H1 (cell line): ENCODE measurements at regions of chr1 and their contacts with region 1.

Region 1: DNA sequence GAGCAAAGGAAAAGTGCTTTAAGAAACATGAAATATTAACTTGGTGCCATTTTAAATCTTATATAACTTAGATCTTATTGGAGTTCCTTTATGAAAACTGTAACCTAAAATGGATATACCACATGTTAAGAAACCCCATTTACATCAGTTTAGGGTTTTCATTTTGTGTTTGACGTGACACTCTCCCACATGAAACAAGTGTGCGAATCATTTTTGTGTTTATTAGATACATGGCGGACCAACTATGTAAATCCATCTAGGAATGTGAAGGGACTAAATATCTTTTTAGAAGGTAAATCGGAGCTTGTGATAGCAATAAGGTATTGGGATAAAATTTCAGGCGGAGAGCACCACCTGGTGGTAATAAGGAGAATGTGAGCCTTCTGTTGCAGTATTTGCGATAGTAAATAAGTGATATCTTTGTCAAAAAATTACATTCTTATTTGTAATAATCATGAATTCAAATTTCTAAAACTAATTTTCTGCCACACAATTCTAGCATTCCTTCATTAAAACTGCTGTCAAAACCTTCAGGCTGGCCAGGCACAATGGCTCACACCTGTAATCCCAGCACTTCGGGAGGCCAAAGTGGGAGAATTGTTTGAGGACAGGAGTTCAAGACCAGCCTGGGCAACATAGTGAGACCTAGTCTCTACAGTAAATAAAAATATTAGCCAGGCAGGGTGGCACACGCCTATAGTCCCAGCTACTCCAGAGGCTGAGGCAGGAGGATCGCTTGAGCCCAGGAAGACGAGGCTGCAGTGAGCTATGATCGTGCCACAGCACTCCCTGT is 31.3 kb downstream of the SMAP2 start:
- DNase-seq: no peak
- H3K4me3 ChIP-seq: no peak overlapping the region
- H3K27ac ChIP-seq: no peak overlapping the region
- H3K4me1 ChIP-seq: peaks cover 0 to 6% (median 1%) of the 10 kb centered on the region in 4 experiments; a peak in 2 of 7 replicates
- H3K27me3 ChIP-seq: no peaks in the 10 kb centered on the region
- CTCF ChIP-seq: peak in 2 of 3 experiments; percentile 48 to 72; a peak in 2 of 4 replicates
- EP300 ChIP-seq: no peak
- POLR2A ChIP-seq: no peak
- RAD21 ChIP-seq: peak; percentile 82 to 83

Region 2: DNA sequence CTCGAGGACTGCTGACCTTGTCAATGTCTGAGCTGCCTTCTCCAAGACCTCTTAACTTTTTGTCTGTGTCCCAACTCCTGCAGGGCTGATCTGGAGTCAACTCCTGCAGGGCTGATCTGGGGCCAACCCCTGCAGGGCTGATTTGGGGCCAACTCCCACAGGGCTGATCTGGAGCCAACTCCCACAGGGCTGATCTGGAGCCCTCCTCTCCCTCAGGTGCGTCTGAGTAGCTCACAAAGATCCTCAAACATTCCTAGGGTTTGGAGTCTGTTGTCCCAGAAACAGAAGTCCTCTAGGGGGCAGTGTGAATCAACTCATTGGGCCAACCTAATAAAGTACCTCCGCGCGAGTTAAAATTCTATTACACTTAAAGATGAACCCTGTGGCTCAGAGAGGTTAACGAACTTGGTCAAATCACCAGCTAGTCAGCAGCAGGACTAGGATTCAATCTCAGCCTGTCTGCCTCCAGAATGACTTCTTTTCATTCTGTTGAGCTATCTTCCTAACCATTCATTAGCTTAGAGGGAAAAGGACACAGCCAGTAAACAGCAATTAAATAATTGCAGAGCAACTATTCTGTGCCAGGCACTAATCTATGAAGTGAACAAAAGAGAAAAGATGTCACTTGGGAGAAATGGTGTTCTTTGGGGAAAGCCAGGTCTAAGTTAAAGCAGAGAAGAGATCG is 260.8 kb before region 1 on chr1:
- CTCF ChIA-PET with region 1: interaction called, 11 read pairs
- POLR2A ChIA-PET with region 1: no interaction called
- DNase-seq: peak; percentile 43 to 75
- H3K4me3 ChIP-seq: no peak overlapping the region
- H3K27ac ChIP-seq: no peak overlapping the region
- H3K4me1 ChIP-seq: peaks cover 0 to 2% (median 0%) of the 10 kb centered on the region in 4 experiments; a peak in 1 of 7 replicates
- H3K27me3 ChIP-seq: peaks cover 0 to 2% (median under 1%) of the 10 kb centered on the region in 4 experiments; a peak in 3 of 7 replicates
- CTCF ChIP-seq: peak in 2 of 3 experiments; percentile 80 to 88; a peak in 3 of 4 replicates
- EP300 ChIP-seq: no peak
- POLR2A ChIP-seq: peak in 1 of 2 experiments; percentile 41; a peak in 1 of 3 replicates
- RAD21 ChIP-seq: peak; percentile 88 to 89

Region 3: DNA sequence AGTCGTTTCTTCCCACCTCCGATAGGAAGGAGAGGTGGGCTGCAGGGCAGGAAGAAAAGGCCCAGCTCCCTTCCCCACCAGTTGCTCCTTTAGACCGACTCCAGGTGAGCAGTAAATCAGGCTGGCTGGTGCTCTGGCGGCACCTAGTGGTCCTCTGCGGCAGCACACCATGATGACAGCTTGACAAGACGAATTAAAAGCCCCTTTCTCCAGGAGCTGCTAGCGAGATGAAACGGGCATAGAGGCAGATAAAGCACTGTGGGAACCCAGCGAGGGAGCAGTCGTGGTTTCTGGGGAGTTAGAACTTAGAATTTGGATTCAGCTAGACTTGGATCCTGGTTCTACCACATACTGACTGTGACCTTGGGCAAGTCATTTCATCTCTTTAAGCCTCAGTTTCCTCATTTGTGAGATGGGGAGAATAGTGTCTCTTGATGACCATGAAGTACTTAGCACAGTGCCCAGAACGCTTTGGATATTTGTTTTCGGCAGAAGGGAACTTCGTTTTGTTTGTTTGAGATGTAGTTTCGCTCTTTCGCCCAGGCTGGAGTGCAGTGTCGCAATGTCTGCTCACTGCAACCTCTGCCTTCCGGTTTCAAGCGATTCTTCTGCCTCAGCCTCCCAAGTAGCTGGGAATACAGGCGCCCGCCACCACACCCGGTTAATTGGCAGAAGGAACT is 66.0 kb before region 1 on chr1:
- CTCF ChIA-PET with region 1: interaction called, 24 read pairs
- POLR2A ChIA-PET with region 1: no interaction called
- DNase-seq: peak; percentile 88 to 98
- H3K4me3 ChIP-seq: no peak overlapping the region
- H3K27ac ChIP-seq: no peak overlapping the region
- H3K4me1 ChIP-seq: no peaks in the 10 kb centered on the region
- H3K27me3 ChIP-seq: no peaks in the 10 kb centered on the region
- CTCF ChIP-seq: peak; percentile 98 to 99 (median 98)
- EP300 ChIP-seq: no peak
- POLR2A ChIP-seq: no peak
- RAD21 ChIP-seq: peak; percentile 100

Region 4: GRCh38 chr1:40385437-40386358 is 19.2 kb before region 1 on chr1:
- CTCF ChIA-PET with region 1: interaction called, 11 read pairs
- POLR2A ChIA-PET with region 1: no interaction called
- DNase-seq: no peak
- H3K4me3 ChIP-seq: no peak overlapping the region
- H3K27ac ChIP-seq: no peak overlapping the region
- H3K4me1 ChIP-seq: peaks cover 0 to 4% (median under 1%) of the 10 kb centered on the region in 4 experiments; a peak in 1 of 7 replicates
- H3K27me3 ChIP-seq: no peaks in the 10 kb centered on the region
- CTCF ChIP-seq: no peak
- EP300 ChIP-seq: no peak
- POLR2A ChIP-seq: no peak
- RAD21 ChIP-seq: no peak

Region 5: GRCh38 chr1:40392221-40392620 is 12.6 kb before region 1 on chr1:
- CTCF ChIA-PET with region 1: interaction called, 27 read pairs
- POLR2A ChIA-PET with region 1: no interaction called
- DNase-seq: no peak
- H3K4me3 ChIP-seq: no peak overlapping the region
- H3K27ac ChIP-seq: no peak overlapping the region
- H3K4me1 ChIP-seq: peaks cover 0 to 2% (median 0%) of the 10 kb centered on the region in 4 experiments; a peak in 1 of 7 replicates
- H3K27me3 ChIP-seq: no peaks in the 10 kb centered on the region
- CTCF ChIP-seq: no peak
- EP300 ChIP-seq: no peak
- POLR2A ChIP-seq: no peak
- RAD21 ChIP-seq: no peak

Region 6: DNA sequence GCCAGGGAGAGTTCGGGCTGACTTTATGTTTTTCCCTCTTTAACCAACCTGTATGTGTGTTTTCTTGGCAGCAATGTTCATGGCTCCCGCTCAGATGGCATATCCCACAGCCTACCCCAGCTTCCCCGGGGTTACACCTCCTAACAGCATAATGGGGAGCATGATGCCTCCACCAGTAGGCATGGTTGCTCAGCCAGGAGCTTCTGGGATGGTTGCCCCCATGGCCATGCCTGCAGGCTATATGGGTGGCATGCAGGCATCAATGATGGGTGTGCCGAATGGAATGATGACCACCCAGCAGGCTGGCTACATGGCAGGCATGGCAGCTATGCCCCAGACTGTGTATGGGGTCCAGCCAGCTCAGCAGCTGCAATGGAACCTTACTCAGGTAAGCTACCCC is 11.8 kb after region 1 on chr1:
- CTCF ChIA-PET with region 1: interaction called, 10 read pairs
- POLR2A ChIA-PET with region 1: no interaction called
- DNase-seq: no peak
- H3K4me3 ChIP-seq: no peak overlapping the region
- H3K27ac ChIP-seq: no peak overlapping the region
- H3K4me1 ChIP-seq: peaks cover 0 to 3% (median 3%) of the 10 kb centered on the region in 4 experiments; a peak in 2 of 7 replicates
- H3K27me3 ChIP-seq: no peaks in the 10 kb centered on the region
- CTCF ChIP-seq: no peak
- EP300 ChIP-seq: no peak
- POLR2A ChIP-seq: no peak
- RAD21 ChIP-seq: no peak

Region 7: GRCh38 chr1:40423264-40423642 is 18.4 kb after region 1 on chr1:
- CTCF ChIA-PET with region 1: interaction called, 13 read pairs
- POLR2A ChIA-PET with region 1: no interaction called
- DNase-seq: no peak
- H3K4me3 ChIP-seq: no peak overlapping the region
- H3K27ac ChIP-seq: no peak overlapping the region
- H3K4me1 ChIP-seq: peaks cover 0 to 4% (median 4%) of the 10 kb centered on the region in 4 experiments; a peak in 3 of 7 replicates
- H3K27me3 ChIP-seq: no peaks in the 10 kb centered on the region
- CTCF ChIP-seq: no peak
- EP300 ChIP-seq: no peak
- POLR2A ChIP-seq: no peak
- RAD21 ChIP-seq: no peak

Region 8: GRCh38 chr1:40478276-40478675 is 73.4 kb after region 1 on chr1:
- CTCF ChIA-PET with region 1: no interaction called
- POLR2A ChIA-PET with region 1: no interaction called
- DNase-seq: no peak
- H3K4me3 ChIP-seq: peak overlapping the region in 2 of 4 experiments; percentile 77 to 81; a peak in 3 of 8 replicates
- H3K27ac ChIP-seq: no peak overlapping the region
- H3K4me1 ChIP-seq: peaks cover 0 to 4% (median 0%) of the 10 kb centered on the region in 4 experiments; a peak in 1 of 7 replicates
- H3K27me3 ChIP-seq: peaks cover 0 to 3% (median 0%) of the 10 kb centered on the region in 4 experiments; a peak in 1 of 7 replicates
- CTCF ChIP-seq: no peak
- EP300 ChIP-seq: no peak
- POLR2A ChIP-seq: no peak
- RAD21 ChIP-seq: no peak

Region 9: DNA sequence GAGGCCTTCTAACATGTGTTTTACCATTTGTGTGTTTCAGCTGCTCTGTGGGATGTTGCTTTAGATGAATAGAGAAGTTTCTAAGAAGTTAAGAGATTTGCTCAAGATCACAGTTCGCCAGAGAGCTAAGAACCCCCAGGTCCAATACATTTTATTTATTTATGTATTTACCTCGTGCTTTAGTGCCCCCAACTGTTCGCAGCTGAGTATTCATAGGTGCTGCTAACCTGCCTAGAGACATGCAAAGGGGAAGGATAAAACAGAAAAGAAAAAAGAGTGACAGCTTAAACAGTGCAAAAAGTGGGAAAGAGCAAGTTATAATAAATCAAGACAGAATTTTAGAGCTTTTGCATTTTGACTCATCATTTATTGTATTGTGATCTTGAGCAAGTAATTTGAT is 317.8 kb after region 1 on chr1:
- CTCF ChIA-PET with region 1: no interaction called
- POLR2A ChIA-PET with region 1: no interaction called
- DNase-seq: no peak
- H3K4me3 ChIP-seq: no peak overlapping the region
- H3K27ac ChIP-seq: no peak overlapping the region
- H3K4me1 ChIP-seq: no peaks in the 10 kb centered on the region
- H3K27me3 ChIP-seq: no peaks in the 10 kb centered on the region
- CTCF ChIP-seq: no peak
- EP300 ChIP-seq: no peak
- POLR2A ChIP-seq: no peak
- RAD21 ChIP-seq: 0 out of 4 replicates have a peak, but pooled peaks of 1 of the 2 experiments have one; percentile 9